Activated T-helper 1 cell treated with anti-CD3 and anti-CD28 coated beads, Interleukin-12 subunit alpha, Interleukin-12 subunit beta, Interleukin-2, Interleukin-4 antibody, amounts not matched to agents 30 ng/mL and 10 ng/mL and 1 ng/mL, durations not matched to agents 14 hours and 24 hours and 36 hours (primary cell): ENCODE measurements at regions of chr11 and their contacts with region 1.

Region 1: DNA sequence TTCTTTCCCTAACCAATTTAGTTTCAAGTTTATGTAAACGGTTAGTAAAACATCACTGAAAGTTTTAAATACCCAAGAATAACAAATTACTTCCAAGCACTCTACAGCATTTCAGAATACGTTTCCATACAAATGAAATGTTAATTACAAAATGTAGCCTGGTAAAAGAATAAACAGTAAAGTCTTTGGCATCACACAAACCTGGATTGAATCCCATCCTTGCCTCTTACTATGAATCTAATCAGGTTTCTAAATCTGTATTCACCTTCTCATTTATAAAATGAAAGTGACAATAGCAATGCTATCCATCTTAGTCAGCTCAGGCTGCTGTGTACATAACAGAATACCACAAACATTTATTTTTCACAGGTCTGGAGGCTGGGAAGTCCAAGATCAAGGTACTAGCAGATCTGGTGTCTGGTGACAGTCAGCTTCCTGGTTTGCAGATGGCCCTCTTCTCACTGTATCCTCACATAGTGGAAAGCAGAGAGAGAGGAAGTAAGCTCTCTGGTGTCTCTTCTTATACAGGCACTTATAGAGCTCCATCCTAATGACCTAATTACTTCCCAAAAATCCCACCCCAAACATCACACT is 19.2 kb downstream of the FAM168A start:
- DNase-seq: no peak
- H3K4me3 Mint-ChIP-seq: no peak overlapping the region
- H3K27ac Mint-ChIP-seq: peak overlapping the region; percentile 52
- H3K4me1 Mint-ChIP-seq: peaks cover 28% of the 10 kb centered on the region
- H3K27me3 Mint-ChIP-seq: no peaks in the 10 kb centered on the region

Region 2: GRCh38 chr11:73521621-73522020 is 57.1 kb before region 1 on chr11:
- intact Hi-C with region 1: loop called (anchors 5 kb)
- DNase-seq: no peak
- H3K4me3 Mint-ChIP-seq: peak overlapping the region; percentile 23
- H3K27ac Mint-ChIP-seq: peak overlapping the region; percentile 64
- H3K4me1 Mint-ChIP-seq: peaks cover 35% of the 10 kb centered on the region
- H3K27me3 Mint-ChIP-seq: no peaks in the 10 kb centered on the region

Region 3: GRCh38 chr11:73538381-73538872 is 40.3 kb before region 1 on chr11:
- intact Hi-C with region 1: loop called (anchors 1 kb)
- DNase-seq: no peak
- H3K4me3 Mint-ChIP-seq: peak overlapping the region; percentile 19
- H3K27ac Mint-ChIP-seq: peak overlapping the region; percentile 82
- H3K4me1 Mint-ChIP-seq: peaks cover 20% of the 10 kb centered on the region
- H3K27me3 Mint-ChIP-seq: no peaks in the 10 kb centered on the region

Region 4: DNA sequence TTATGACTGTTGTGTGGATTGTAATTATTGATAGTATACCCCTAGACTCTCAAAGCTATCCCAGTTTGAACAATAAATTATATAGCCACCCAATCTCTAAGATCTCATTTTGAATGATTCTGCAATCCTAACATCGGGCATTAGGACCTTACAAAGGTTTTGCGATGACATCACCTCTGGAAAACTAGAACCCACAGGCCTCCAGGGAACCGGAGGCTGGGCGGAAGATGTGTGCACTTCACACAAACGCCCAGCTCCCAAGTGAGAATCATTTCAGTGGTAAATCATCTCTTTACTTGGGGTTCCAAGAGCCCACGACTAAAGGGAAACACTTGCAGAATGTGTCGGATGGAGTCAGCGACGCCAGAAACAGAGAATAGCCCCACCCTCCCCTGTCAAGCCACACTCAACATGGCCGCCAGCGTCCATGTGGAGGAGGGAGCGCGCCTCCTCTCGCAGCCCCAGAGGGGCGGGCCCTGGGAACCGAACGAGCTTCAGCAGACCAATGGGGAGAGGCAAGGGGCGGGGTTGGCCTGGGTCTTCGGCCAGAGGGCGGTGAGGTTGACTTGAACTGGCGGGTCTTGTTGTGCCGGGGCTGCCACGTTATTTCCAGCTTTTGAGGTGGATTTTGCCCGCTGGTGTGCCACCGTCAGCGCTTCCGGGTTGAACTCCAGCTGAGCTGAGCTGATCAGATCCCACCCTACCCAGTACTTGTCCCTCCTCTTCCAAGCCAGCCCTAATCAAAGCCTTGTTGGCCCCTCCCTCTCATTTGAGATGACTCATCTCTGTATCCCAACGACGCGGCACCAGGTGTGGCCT is 200.6 kb after region 1 on chr11:
- intact Hi-C with region 1: no loop called
- DNase-seq: peak; percentile 97
- H3K4me3 Mint-ChIP-seq: peak overlapping the region; percentile 90
- H3K27ac Mint-ChIP-seq: peak overlapping the region; percentile 99
- H3K4me1 Mint-ChIP-seq: peaks cover 10% of the 10 kb centered on the region
- H3K27me3 Mint-ChIP-seq: no peaks in the 10 kb centered on the region